ENCODE measurements at regions of chr1 and their contacts with region 1.

Region 1: GRCh38 chr1:198651650-198652400 is 13.0 kb downstream of the PTPRC start:
- DNase-seq: no peak
- H3K4me3 Mint-ChIP-seq: peak overlapping the region; percentile 73
- H3K27ac Mint-ChIP-seq: peak overlapping the region; percentile 100
- H3K4me1 Mint-ChIP-seq: peaks cover 69% of the 10 kb centered on the region
- H3K27me3 Mint-ChIP-seq: no peaks in the 10 kb centered on the region

Region 2: DNA sequence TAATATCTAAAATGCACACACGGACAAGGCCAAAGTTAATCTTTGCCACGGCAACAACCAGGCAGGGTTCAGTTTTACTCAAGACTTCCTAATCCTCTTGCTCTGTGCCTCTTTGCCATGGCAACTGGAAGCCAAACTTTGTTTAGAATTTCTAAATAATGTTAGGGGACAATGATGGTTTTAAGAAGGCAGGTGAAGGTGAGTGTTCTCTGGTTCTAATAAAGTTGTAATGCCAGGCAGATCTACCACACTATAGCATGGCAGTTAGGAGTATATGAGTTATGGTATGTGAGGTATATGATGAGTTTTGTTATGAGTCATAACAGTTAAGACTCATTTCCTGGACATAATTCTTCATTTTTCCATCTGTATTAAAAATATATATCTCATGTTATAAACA is 10.3 kb before region 1 on chr1:
- CTCF ChIA-PET with region 1: interaction called, 5 read pairs
- intact Hi-C with region 1: loop called (anchors 1 kb)
- DNase-seq: peak; percentile 49
- H3K4me3 Mint-ChIP-seq: peak overlapping the region; percentile 92
- H3K27ac Mint-ChIP-seq: peak overlapping the region; percentile 100
- H3K4me1 Mint-ChIP-seq: peaks cover 41% of the 10 kb centered on the region
- H3K27me3 Mint-ChIP-seq: no peaks in the 10 kb centered on the region

Region 3: GRCh38 chr1:198669023-198669698 is 17.3 kb after region 1 on chr1:
- CTCF ChIA-PET with region 1: interaction called, 5 read pairs
- intact Hi-C with region 1: loop called (anchors 1 kb)
- DNase-seq: peak; percentile 46
- H3K4me3 Mint-ChIP-seq: peak overlapping the region; percentile 57
- H3K27ac Mint-ChIP-seq: peak overlapping the region; percentile 84
- H3K4me1 Mint-ChIP-seq: peaks cover 87% of the 10 kb centered on the region
- H3K27me3 Mint-ChIP-seq: no peaks in the 10 kb centered on the region

Region 4: GRCh38 chr1:198676253-198676652 is 24.4 kb after region 1 on chr1:
- CTCF ChIA-PET with region 1: interaction called, 10 read pairs
- intact Hi-C with region 1: loop called (anchors 1 kb)
- DNase-seq: no peak
- H3K4me3 Mint-ChIP-seq: peak overlapping the region; percentile 52
- H3K27ac Mint-ChIP-seq: peak overlapping the region; percentile 92
- H3K4me1 Mint-ChIP-seq: peaks cover 89% of the 10 kb centered on the region
- H3K27me3 Mint-ChIP-seq: no peaks in the 10 kb centered on the region

Measured in activated naive CD4-positive, alpha-beta T cell treated with anti-CD3 and anti-CD28 coated beads for 36 hours (primary cell).